Activated CD8-positive, alpha-beta T cell treated with anti-CD3 and anti-CD28 coated beads, Interleukin-2, amount 10 ng/mL, durations not matched to agents 7 days and 5 days (primary cell): ENCODE measurements at regions of chr14 and their contacts with region 1.

Region 1: GRCh38 chr14:35229495-35230089 is 62.6 kb upstream of the PSMA6 start:
- DNase-seq: no peak
- ATAC-seq: no peak
- H3K4me3 Mint-ChIP-seq: no peak overlapping the region
- H3K27ac Mint-ChIP-seq: no peak overlapping the region
- H3K4me1 Mint-ChIP-seq: peaks cover 21% of the 10 kb centered on the region
- H3K27me3 Mint-ChIP-seq: no peaks in the 10 kb centered on the region

Region 2: DNA sequence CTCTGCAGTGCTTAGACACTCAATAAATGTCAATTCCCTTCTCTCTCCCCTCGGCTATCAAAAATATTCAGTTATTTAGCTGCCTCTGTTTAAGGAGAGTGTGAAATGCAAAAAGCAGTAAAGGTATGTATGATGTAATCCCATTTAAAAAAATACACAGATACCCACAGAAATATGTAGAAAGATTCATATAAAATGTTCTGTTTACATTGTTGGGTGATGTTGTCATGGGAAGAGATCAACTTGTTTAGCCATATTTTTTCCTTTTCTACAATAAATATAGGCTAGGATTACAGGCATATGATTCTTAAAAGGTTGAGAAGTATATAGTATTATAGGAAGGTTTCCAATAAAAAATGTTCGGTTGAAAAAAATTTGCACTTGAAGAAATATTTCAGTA is 115.6 kb before region 1 on chr14:
- CTCF ChIA-PET with region 1: no interaction called
- POLR2A ChIA-PET with region 1: no interaction called
- DNase-seq: no peak
- ATAC-seq: no peak
- H3K4me3 Mint-ChIP-seq: no peak overlapping the region
- H3K27ac Mint-ChIP-seq: no peak overlapping the region
- H3K4me1 Mint-ChIP-seq: peaks cover 19% of the 10 kb centered on the region
- H3K27me3 Mint-ChIP-seq: no peaks in the 10 kb centered on the region

Region 3: DNA sequence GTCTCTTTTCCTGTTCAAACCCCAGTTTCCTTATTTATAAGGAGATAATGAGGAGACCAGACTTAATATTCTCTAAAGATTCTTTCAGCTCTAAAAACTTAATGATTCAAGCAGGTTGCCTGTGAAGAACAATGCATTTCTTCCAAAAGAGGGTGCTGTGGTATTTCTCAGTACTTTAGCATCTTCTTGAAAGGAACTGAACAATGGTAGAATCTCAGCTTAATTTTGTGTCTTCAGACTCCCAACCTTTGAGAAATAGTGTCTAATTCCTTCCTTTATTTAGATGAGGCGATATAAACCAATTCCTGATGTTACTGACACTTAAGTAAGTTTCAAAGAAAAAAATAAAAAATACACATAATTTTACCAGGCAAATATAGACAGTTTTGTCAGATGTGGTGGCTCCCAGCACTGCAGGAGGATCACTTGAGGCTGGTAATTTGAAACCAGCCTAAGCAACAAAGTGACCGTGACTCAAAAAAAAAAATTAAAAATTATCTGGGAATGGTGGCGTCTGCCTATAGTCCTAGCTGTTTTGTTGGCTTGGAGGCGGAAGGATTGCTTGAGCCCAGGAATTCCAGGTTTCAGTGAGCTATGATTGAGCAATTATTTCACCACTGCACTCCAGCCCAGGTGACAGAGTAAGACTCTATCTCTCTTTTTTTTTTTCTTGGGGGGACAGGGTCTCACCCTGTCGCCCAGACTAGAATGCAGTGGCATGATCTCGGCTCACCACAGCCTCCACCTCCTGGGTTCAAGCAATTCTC is 14.3 kb before region 1 on chr14:
- CTCF ChIA-PET with region 1: interaction called, 18 read pairs
- POLR2A ChIA-PET with region 1: no interaction called
- DNase-seq: no peak
- ATAC-seq: no peak
- H3K4me3 Mint-ChIP-seq: no peak overlapping the region
- H3K27ac Mint-ChIP-seq: no peak overlapping the region
- H3K4me1 Mint-ChIP-seq: peaks cover 16% of the 10 kb centered on the region
- H3K27me3 Mint-ChIP-seq: no peaks in the 10 kb centered on the region

Region 4: DNA sequence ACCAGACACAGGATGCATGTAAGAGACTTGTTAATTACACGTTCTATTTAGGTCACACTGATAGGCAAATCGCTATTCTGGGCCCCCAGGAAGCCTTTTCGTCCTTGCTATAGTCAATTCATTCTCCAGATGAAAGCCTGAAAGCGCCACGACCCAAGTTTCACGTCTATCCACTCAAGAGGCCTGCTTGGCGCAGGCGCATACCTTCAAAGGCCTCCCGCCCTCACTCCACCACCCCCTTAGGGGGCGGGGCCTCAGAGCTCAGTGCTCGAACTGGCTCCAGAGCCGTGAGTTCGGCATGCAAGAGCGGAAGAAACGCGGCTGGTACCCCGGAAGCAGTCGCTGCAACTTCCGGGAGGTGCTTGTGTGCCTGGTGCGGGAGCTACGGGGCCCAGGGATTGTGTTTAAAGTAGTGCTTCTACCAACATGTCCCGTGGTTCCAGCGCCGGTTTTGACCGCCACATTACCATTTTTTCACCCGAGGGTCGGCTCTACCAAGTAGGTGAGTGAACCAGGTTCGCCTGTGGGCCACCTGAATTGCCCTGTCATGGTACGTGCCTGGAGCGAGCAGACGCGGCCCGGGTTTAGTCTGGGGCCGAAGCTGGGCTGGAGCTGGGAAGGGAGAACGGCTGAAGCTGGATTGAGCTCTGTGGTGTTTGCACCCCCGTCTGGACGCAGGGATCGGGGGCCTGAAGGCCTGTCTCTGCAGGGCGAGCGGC is 62.6 kb after region 1 on chr14 and contains the start of gene PSMA6:
- CTCF ChIA-PET with region 1: interaction called, 44 read pairs
- POLR2A ChIA-PET with region 1: interaction called, 4 read pairs
- DNase-seq: peak; percentile 100
- ATAC-seq: peak; percentile 94
- H3K4me3 Mint-ChIP-seq: peak within 1 kb of the TSS; percentile 99
- H3K27ac Mint-ChIP-seq: peak within 1 kb of the TSS; percentile 98
- H3K4me1 Mint-ChIP-seq: peaks cover 41% of the 10 kb centered on the region
- H3K27me3 Mint-ChIP-seq: no peaks in the 10 kb centered on the region
- total RNA-seq, gene PSMA6: 266 to 269 TPM

Region 5: DNA sequence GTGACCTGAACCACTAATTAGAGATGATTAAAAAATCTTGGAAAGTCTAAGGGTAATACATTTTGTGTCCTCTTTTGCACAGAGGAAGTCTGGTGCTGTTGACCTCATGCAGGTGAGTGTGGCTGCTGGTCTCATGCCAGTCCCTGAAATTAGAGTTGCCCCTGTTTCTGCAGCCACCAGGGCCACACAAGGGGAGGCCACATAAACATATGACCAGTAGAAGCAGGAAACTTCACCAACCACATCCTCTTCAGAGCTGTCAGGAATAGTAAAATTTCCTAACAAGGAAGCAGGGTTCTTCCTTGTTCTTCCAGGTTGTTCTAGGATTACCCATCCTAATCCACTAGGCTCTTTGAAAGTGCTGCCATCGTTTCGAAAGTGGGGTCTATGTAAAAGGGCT is 90.9 kb after region 1 on chr14:
- CTCF ChIA-PET with region 1: interaction called, 12 read pairs
- POLR2A ChIA-PET with region 1: no interaction called
- DNase-seq: no peak
- ATAC-seq: no peak
- H3K4me3 Mint-ChIP-seq: no peak overlapping the region
- H3K27ac Mint-ChIP-seq: peak overlapping the region; percentile 54
- H3K4me1 Mint-ChIP-seq: peaks cover 14% of the 10 kb centered on the region
- H3K27me3 Mint-ChIP-seq: no peaks in the 10 kb centered on the region

Region 6: GRCh38 chr14:35365130-35366055 is 135.8 kb after region 1 on chr14:
- CTCF ChIA-PET with region 1: interaction called, 16 read pairs
- POLR2A ChIA-PET with region 1: no interaction called
- DNase-seq: peak; percentile 59
- ATAC-seq: peak; percentile 67
- H3K4me3 Mint-ChIP-seq: no peak overlapping the region
- H3K27ac Mint-ChIP-seq: peak overlapping the region; percentile 52
- H3K4me1 Mint-ChIP-seq: peaks cover 44% of the 10 kb centered on the region
- H3K27me3 Mint-ChIP-seq: no peaks in the 10 kb centered on the region